HEK293 (cell line): ENCODE measurements at regions of chr21 and their contacts with region 1.

Region 1: DNA sequence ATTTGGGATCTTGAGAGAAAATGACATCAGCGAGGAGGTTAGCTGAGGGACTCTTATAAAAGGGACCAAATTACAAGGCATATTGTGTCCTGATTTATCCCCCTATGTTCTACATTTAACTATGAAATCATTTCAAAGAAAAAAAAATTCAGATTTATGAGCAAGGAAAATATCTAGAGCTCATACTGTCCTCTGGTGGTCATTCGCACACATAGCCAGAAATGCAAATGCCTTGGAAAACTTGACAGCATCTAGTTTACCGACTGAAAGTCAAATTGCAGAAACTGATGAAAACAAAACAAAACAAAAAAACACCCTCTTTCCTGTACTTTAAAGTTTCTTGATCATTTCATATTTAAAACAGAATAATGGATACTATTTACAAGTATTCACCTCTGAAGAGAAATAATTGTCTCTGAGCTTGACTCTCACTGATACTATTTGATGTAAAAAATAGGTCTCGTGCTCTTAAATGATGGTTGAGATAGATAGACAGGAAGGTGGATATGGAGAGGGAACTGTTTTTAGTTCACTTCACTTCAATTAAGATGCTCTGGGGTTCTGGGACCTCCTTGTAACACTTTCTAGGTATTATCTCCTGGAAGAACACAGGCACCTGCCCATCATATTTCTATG is 253.8 kb downstream of the PCP4 start:
- H3K4me3 ChIP-seq: no peak overlapping the region
- H3K27ac ChIP-seq: no peak overlapping the region
- H3K4me1 ChIP-seq: no peaks in the 10 kb centered on the region
- CTCF ChIP-seq: peak; percentile 44; the same call in 1 of the 2 replicates

Region 2: GRCh38 chr21:39518138-39518846 is 602.8 kb before region 1 on chr21:
- CTCF ChIA-PET with region 1: interaction called, 15 read pairs
- POLR2A ChIA-PET with region 1: no interaction called
- H3K4me3 ChIP-seq: no peak overlapping the region
- H3K27ac ChIP-seq: no peak overlapping the region
- H3K4me1 ChIP-seq: peaks cover 3% of the 10 kb centered on the region; the same call in 1 of the 2 replicates
- CTCF ChIP-seq: peak; percentile 91

Region 3: DNA sequence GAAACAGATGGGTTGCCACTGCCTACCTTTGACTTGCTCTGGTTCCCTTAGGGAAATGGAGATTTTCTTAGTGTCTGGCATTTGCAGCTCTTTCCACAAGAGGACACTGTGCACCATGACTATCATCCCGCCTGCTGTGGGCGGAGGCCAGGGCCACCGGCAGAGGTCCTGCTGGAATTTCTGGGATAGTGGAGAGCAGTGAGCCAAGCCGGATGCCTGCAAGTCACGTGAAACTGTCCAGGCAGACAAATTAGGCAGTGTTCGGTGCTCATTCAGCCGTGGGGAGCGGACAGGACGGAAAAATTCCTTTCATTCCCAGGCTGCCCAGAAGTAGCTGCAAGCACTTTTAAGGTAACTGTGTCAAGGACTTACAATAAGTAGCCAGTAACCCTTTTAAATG is 332.7 kb before region 1 on chr21:
- CTCF ChIA-PET with region 1: interaction called, 96 read pairs
- POLR2A ChIA-PET with region 1: no interaction called
- H3K4me3 ChIP-seq: no peak overlapping the region
- H3K27ac ChIP-seq: no peak overlapping the region
- H3K4me1 ChIP-seq: no peaks in the 10 kb centered on the region
- CTCF ChIP-seq: peak; percentile 97

Region 4: GRCh38 chr21:40043431-40043830 is 77.6 kb before region 1 on chr21:
- CTCF ChIA-PET with region 1: interaction called, 88 read pairs
- POLR2A ChIA-PET with region 1: no interaction called
- H3K4me3 ChIP-seq: no peak overlapping the region
- H3K27ac ChIP-seq: no peak overlapping the region
- H3K4me1 ChIP-seq: 0 out of 2 replicates have a peak, but pooled peaks cover 4% of the 10 kb centered on the region
- CTCF ChIP-seq: no peak

Region 5: DNA sequence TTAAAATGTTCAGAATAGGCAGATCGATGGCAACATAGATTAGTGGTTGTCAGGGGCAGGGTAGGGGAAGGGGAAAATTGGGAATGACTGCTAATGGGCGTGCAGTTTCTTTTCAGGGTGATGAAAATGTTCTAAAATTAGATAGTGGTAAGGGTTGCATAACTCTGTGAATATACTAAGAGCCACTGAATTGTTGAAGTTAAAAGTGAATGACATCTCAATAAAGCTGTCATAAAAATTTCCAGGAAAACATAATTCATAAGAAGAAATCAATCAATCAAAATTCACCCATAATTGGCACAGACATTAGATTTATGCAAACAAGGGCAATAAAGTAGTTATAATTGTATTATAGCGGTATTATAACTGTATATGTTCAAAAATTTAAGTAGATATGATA is 25.6 kb before region 1 on chr21:
- CTCF ChIA-PET with region 1: interaction called, 10 read pairs
- POLR2A ChIA-PET with region 1: no interaction called
- H3K4me3 ChIP-seq: no peak overlapping the region
- H3K27ac ChIP-seq: no peak overlapping the region
- H3K4me1 ChIP-seq: no peaks in the 10 kb centered on the region
- CTCF ChIP-seq: no peak

Region 6: DNA sequence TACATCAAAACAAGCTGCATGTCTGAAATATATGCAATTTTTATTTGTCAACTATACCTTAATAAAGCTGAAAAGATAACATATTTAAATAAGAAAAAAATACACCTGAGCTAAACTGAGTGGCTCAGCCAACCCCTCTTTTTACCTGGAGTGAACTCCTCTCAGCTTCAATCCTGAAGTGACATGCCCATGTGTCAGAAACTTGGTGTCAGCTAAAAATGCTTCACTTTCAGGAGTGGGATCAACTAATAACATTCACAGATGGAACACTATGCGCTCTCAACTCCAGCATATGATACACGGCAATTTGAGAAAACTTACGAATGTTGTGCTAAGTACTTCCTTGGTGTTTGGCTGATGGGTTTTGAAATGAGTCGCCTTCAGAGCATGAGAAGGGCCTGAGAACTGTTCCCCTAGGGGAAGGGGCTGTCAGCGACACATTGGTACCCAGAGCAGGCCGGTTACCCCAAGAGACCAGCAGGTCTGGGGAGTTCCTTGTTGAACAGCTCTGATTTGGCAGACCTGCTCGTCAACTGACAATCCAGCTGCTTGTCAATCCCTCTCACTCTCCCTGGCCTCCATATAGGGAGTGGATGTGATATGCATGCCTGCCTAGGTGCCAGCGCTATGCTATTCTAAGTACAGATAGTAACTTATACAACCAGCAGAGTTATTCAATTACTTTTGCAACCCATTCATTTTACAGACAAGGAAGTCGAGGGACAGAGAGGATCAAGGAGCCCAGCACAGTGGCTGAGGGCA is 13.9 kb after region 1 on chr21:
- CTCF ChIA-PET with region 1: no interaction called
- POLR2A ChIA-PET with region 1: no interaction called
- H3K4me3 ChIP-seq: no peak overlapping the region
- H3K27ac ChIP-seq: no peak overlapping the region
- H3K4me1 ChIP-seq: no peaks in the 10 kb centered on the region
- CTCF ChIP-seq: no peak

Region 7: GRCh38 chr21:40200946-40201345 is 79.9 kb after region 1 on chr21:
- CTCF ChIA-PET with region 1: no interaction called
- POLR2A ChIA-PET with region 1: no interaction called
- H3K4me3 ChIP-seq: no peak overlapping the region
- H3K27ac ChIP-seq: no peak overlapping the region
- H3K4me1 ChIP-seq: no peaks in the 10 kb centered on the region
- CTCF ChIP-seq: no peak